ENCODE measurements at regions of chr9 and their contacts with region 1.

Region 1: DNA sequence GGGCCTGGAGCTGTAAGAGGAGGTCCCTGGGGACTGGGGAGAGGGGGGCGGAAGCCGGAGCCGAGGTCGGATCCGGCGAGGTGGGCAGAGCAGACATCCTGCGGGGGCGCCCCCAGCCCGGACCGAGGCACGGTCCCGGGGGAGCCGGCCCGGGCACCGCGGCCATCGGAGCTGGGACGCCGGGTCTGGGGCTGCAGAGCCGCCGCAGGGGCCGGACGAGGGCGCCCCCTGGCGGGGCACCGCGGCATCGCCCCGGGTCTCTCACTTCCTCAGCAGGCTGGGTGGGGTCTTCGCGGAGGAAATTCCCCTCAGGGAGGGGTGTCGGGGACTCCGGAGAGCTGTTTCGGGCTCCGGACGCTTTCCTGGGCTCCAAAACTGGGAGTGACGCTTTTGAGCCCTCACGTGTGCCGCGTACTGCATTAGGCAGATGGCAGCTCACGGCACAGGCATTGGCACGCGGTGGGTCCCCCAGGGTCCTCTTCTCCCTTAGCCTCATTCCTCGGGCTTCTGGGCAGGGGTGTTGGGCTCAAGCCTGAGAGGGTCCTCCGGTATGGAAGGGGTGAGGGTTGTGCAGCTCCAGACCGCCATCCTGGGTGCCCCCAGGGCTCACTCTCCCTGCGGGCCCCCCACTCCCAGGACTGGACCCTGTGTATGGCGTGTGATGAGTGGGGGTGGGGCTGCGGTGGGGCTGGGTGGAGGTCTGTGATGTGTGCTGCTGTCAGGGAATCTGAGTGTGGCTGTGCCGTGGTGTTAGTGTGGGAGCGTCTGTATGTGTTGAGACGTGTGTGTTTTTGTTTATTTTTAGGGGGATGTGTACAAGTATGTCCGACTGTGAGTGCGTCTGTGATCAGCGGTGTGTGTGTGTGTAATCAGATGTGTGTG is 29.6 kb downstream of the LHX2 start:
- DNase-seq: peak in 4 of 5 donors; percentile 51 to 78 (median 54)
- ATAC-seq: peak in 3 of 4 donors; percentile 43 to 76 (median 72)
- H3K4me3 ChIP-seq: peak overlapping the region; percentile 17 to 53 (median 44)
- H3K27ac ChIP-seq: no peak overlapping the region
- H3K4me1 ChIP-seq: peaks cover 0 to 31% (median 20%) of the 10 kb centered on the region in 12 donors
- H3K27me3 ChIP-seq: peaks cover 6 to 74% (median 25%) of the 10 kb centered on the region in 9 donors
- CTCF ChIP-seq: peak; percentile 85 to 98 (median 96)
- POLR2A ChIP-seq: no peak

Region 2: GRCh38 chr9:123401879-123402513 is 639.2 kb before region 1 on chr9:
- intact Hi-C with region 1: loop called in 7 of 10 experiments (anchors 2 to 5 kb)
- DNase-seq: no peak
- ATAC-seq: peak; percentile 73 to 85 (median 82)
- H3K4me3 ChIP-seq: peak overlapping the region in 4 of 12 donors; percentile 19 to 31 (median 26)
- H3K27ac ChIP-seq: peak overlapping the region in 3 of 12 donors; percentile 9 to 53 (median 18)
- H3K4me1 ChIP-seq: peaks cover 0 to 10% (median 0%) of the 10 kb centered on the region in 12 donors
- H3K27me3 ChIP-seq: no peaks in the 10 kb centered on the region
- CTCF ChIP-seq: peak; percentile 43 to 78 (median 69)
- POLR2A ChIP-seq: no peak

Region 3: GRCh38 chr9:123710299-123710698 is 330.9 kb before region 1 on chr9:
- intact Hi-C with region 1: loop called in 1 of 10 experiments (anchors 10 kb)
- DNase-seq: no peak
- ATAC-seq: no peak
- H3K4me3 ChIP-seq: no peak overlapping the region
- H3K27ac ChIP-seq: no peak overlapping the region
- H3K4me1 ChIP-seq: no peaks in the 10 kb centered on the region
- H3K27me3 ChIP-seq: no peaks in the 10 kb centered on the region
- CTCF ChIP-seq: no peak
- POLR2A ChIP-seq: no peak

Region 4: DNA sequence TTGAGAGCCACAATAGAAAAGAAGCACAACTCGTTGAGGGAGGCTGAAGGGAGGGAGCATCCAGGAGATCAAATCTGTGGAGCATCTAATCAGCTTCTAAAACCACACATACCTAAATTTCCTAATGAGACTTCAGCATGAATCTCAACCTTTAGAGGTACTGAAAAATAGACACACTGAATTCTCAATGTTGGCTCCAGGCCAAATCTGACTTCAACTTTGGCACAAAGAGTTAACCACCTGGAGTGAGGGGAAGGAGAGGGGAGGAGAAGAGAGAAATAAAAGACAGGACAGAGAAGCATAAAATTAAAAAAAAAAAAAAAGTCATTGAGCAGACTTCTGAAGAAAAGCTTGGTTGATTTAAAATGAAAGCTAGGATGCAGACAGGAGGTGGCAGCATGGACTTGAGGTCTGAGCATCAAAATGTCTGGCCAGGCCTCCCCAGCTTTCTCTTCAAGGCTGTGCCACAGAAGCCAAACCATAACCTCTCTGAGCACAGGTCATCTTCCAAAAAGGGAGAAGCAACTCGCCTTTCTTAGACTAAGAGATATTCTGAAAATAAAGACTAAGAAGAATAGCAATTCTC is 316.9 kb before region 1 on chr9:
- intact Hi-C with region 1: loop called in 5 of 10 experiments (anchors 2 to 10 kb)
- DNase-seq: peak in 1 of 5 donors; percentile 16
- ATAC-seq: peak in 1 of 4 donors; percentile 54
- H3K4me3 ChIP-seq: no peak overlapping the region
- H3K27ac ChIP-seq: no peak overlapping the region
- H3K4me1 ChIP-seq: no peaks in the 10 kb centered on the region
- H3K27me3 ChIP-seq: no peaks in the 10 kb centered on the region
- CTCF ChIP-seq: peak in 8 of 12 donors; percentile 12 to 45 (median 27)
- POLR2A ChIP-seq: no peak